ENCODE measurements at regions of chr1 and their contacts with region 1.

Region 1: GRCh38 chr1:101238681-101239094 is 1.9 kb downstream of the S1PR1 start:
- H3K4me3 ChIP-seq: no peak overlapping the region
- H3K27ac ChIP-seq: peak overlapping the region; percentile 21; the same call in 1 of the 2 replicates
- H3K4me1 ChIP-seq: peaks cover 7% of the 10 kb centered on the region; the same call in 1 of the 2 replicates
- CTCF ChIP-seq: peak; percentile 88

Region 2: DNA sequence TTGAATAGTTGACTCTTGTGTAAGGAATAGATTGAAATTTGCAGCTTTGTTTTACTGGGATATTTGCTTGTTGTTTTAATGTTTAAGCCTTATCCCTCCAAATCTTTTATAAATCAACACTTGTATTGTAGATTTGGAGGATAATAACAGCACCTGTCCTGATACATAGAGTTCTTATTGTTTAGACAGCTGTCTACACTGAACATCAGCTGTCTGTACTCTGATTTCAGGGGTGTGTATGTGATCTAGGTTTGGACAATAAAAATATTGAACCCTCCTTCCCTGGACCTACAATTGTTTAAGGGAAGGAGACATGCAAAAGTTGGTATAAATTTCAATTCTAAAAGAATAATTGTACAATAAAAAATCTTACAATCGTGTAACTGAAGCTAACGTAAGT is 164.9 kb before region 1 on chr1:
- CTCF ChIA-PET with region 1: interaction called, 3 read pairs
- POLR2A ChIA-PET with region 1: interaction called, 10 read pairs
- H3K4me3 ChIP-seq: no peak overlapping the region
- H3K27ac ChIP-seq: no peak overlapping the region
- H3K4me1 ChIP-seq: no peaks in the 10 kb centered on the region
- CTCF ChIP-seq: no peak

Region 3: GRCh38 chr1:101136739-101137138 is 101.9 kb before region 1 on chr1:
- CTCF ChIA-PET with region 1: interaction called, 15 read pairs
- POLR2A ChIA-PET with region 1: interaction called, 7 read pairs
- H3K4me3 ChIP-seq: no peak overlapping the region
- H3K27ac ChIP-seq: no peak overlapping the region
- H3K4me1 ChIP-seq: peaks cover 8% of the 10 kb centered on the region
- CTCF ChIP-seq: peak; percentile 59; the same call in 1 of the 2 replicates

Region 4: DNA sequence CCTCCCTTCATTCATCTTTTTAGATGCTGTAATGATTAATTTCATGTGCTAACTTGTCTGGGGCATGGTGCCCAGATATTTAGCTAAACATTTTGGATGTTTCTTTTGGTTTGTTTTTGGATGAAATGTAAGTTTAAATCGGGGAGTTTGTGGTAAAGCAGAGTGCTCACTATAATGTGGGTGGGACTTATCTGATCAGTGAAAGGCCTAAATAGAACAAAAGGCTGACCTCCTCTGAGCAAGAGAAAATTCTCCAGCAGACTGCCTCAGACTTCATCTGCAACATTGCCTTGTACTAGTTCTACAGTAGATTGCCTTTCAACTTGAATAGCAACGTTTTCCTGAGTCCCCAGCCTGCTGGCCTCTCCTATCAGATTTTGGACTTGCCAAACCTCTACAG is 181.7 kb after region 1 on chr1:
- CTCF ChIA-PET with region 1: no interaction called
- POLR2A ChIA-PET with region 1: no interaction called
- H3K4me3 ChIP-seq: no peak overlapping the region
- H3K27ac ChIP-seq: no peak overlapping the region
- H3K4me1 ChIP-seq: no peaks in the 10 kb centered on the region
- CTCF ChIP-seq: no peak

Measured in HEK293 (cell line).